Activated naive CD4-positive, alpha-beta T cell treated with anti-CD3 and anti-CD28 coated beads, Interleukin-2, amount 10 ng/mL, durations not matched to agents 7 days and 5 days (primary cell): ENCODE measurements at regions of chr16 and their contacts with region 1.

Region 1: DNA sequence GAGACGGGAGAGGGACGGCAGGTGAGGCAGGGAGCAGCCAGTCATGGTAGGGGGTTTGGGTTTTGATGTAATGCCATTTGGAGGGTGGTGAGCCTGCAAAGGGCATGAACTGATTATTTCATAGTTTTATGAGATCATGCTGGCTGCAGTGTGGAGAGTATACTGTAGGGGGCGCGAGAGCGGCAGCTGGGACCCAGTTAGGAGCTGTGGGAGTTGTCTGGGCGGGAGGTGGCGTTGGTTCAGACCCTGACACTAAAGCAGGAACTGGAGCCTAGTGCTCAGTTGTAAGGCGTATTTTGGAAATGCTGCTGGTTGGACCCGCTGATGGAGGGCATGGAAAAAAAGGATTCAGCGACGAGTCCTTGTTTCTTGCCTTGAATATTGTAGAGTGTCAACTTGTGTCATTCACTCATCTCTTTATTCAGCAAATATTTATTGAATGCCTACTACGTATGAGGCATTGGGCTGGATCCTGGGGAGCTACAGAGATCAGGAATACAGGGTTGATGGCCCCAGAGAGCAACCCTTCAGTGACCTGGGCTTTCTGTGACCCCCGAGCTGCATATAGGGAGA is 23.7 kb upstream of the KDM8 start:
- DNase-seq: peak; percentile 94
- H3K4me3 Mint-ChIP-seq: no peak overlapping the region
- H3K27ac Mint-ChIP-seq: peak overlapping the region; percentile 35
- H3K4me1 Mint-ChIP-seq: peaks cover 68% of the 10 kb centered on the region
- H3K27me3 Mint-ChIP-seq: peaks cover 16% of the 10 kb centered on the region

Region 2: DNA sequence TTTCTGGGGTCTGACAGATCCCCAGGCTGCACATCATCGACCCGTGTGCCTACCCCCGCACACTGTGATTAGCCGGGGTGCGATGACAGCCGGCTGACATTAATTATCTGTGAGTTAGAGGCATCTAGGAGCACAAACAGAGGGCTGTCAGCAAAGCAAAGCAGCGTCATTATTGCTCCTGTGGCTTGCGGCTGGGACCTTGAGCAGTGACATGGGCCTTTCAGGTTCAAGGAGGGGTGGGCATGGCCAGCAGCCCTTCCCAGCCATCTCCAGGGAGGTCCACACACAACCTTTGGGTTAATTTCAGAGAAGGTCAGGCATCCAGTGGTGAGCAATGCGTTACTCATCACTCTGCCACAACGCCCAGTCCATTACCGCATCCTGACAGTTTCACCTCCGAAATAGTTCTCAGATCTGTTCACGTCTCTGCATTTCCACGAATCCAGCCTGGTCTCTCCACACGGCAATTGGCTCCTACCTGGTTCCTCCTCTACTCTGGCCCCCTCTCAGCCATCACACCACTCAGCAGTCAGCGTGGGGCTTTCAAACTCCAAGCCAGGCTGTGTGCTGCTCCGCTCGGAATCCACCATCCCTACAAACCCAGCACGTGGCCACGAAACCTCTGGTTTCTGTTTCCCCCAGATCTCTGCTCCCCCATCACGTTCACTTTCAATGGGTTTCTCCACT is 362.6 kb before region 1 on chr16:
- CTCF ChIA-PET with region 1: no interaction called
- DNase-seq: no peak
- H3K4me3 Mint-ChIP-seq: no peak overlapping the region
- H3K27ac Mint-ChIP-seq: no peak overlapping the region
- H3K4me1 Mint-ChIP-seq: no peaks in the 10 kb centered on the region
- H3K27me3 Mint-ChIP-seq: no peaks in the 10 kb centered on the region

Region 3: DNA sequence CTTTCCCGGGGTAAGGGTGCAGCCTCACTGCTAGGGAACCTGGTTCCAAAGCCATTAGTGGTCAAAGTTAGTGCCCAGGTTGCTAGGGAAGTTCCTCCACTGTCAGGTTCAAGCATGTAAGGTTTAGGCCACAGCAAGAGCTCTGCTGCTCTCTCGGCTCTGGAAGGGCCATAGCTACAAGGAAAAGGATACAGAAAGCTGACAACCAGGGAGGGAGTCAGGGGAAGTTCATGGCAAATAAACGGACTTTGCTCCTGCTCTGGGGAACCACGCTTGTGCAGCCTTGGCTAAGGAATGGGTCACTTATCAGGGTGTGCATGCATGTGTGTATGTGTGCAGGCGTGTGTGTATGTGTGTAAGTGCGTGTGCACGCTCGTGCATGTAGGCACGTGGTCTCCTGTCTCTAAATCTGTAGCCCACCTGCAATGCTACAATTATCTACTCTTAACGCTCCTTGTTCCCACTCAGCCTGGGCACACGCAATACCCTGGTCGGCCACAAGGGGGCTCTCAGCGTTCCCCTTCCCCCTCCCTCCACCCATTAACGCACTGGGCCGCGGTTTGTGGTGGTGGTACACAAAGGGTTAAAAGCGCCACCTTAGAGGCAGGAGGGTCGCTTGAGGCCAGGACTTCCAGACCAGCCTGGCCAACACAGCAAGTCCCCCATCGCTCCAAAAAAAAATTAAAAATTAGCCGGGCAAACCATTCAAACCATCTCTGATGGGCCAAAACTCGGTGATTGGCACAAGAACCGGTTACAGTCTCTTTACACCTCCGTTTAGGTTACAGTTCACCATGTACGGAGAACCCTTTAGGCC is 24.7 kb before region 1 on chr16:
- CTCF ChIA-PET with region 1: interaction called, 12 read pairs
- DNase-seq: peak; percentile 76
- H3K4me3 Mint-ChIP-seq: no peak overlapping the region
- H3K27ac Mint-ChIP-seq: no peak overlapping the region
- H3K4me1 Mint-ChIP-seq: peaks cover 16% of the 10 kb centered on the region
- H3K27me3 Mint-ChIP-seq: peaks cover 5% of the 10 kb centered on the region

Region 4: GRCh38 chr16:27203429-27204231 is 24.0 kb after region 1 on chr16 and contains the start of gene KDM8:
- CTCF ChIA-PET with region 1: interaction called, 41 read pairs
- DNase-seq: peak; percentile 100
- H3K4me3 Mint-ChIP-seq: peak within 1 kb of the TSS; percentile 97
- H3K27ac Mint-ChIP-seq: peak within 1 kb of the TSS; percentile 99
- H3K4me1 Mint-ChIP-seq: peaks cover 69% of the 10 kb centered on the region
- H3K27me3 Mint-ChIP-seq: no peaks in the 10 kb centered on the region

Region 5: DNA sequence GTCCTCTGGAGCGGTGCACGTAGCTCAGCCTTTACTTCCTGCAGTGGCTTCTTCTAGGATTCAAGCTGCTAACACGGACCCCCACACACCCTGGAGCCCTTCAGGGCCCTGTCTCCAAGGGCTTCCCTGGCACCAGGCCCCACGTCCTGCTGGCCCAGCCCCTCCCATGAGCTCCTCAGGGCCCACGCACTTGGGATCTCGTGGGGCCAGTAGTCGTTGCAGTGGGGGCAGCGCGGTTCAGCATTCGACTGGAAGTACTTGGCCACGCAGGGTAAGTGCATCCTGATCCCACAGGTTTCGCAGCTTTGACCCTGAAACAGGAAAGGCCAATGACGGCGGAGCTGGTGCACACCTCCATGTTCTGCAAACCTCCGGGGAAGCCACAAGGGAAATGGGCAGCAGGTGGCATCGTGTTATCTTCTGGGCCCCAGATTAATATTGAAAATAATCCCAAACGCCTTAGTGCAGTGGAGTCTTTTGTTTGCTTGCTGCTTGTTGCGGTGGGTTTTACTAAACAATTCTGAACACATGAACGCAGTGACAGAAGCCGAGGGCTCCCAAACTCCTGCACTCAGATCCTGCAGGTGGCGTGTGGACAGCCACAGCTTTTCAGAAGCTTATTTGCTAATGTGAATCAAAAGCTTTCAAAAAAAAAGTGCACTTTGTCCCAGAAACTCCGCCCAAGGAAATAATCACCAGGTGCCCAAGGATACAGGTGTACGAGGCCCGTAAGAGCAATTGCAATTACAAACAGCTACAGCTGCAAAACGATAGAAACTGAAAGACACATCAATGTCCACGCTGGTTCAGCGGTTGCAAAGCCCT is 46.2 kb after region 1 on chr16:
- CTCF ChIA-PET with region 1: interaction called, 111 read pairs
- DNase-seq: no peak
- H3K4me3 Mint-ChIP-seq: no peak overlapping the region
- H3K27ac Mint-ChIP-seq: peak overlapping the region; percentile 34
- H3K4me1 Mint-ChIP-seq: peaks cover 53% of the 10 kb centered on the region
- H3K27me3 Mint-ChIP-seq: peaks cover 3% of the 10 kb centered on the region

Region 6: GRCh38 chr16:27314161-27314723 is 134.7 kb after region 1 on chr16:
- CTCF ChIA-PET with region 1: interaction called, 27 read pairs
- DNase-seq: peak; percentile 75
- H3K4me3 Mint-ChIP-seq: peak overlapping the region; percentile 94
- H3K27ac Mint-ChIP-seq: peak overlapping the region; percentile 95
- H3K4me1 Mint-ChIP-seq: peaks cover 41% of the 10 kb centered on the region
- H3K27me3 Mint-ChIP-seq: peaks cover 27% of the 10 kb centered on the region

Region 7: GRCh38 chr16:27367461-27368357 is 188.1 kb after region 1 on chr16:
- CTCF ChIA-PET with region 1: interaction called, 59 read pairs
- DNase-seq: peak; percentile 92
- H3K4me3 Mint-ChIP-seq: peak overlapping the region; percentile 50
- H3K27ac Mint-ChIP-seq: peak overlapping the region; percentile 99
- H3K4me1 Mint-ChIP-seq: peaks cover 80% of the 10 kb centered on the region
- H3K27me3 Mint-ChIP-seq: no peaks in the 10 kb centered on the region